ENCODE measurements at regions of chr11 and their contacts with region 1.

Region 1: GRCh38 chr11:118610804-118611795 is 3.7 kb downstream of the PHLDB1 start:
- DNase-seq: peak; percentile 86
- ATAC-seq: peak; percentile 32 to 55 (median 47)
- H3K4me3 ChIP-seq: peak overlapping the region; percentile 60 to 97 (median 74)
- H3K27ac ChIP-seq: peak overlapping the region; percentile 91 to 99 (median 94)
- H3K4me1 ChIP-seq: peaks cover 3 to 81% (median 37%) of the 10 kb centered on the region in 9 donors
- H3K27me3 ChIP-seq: peaks cover 0 to 56% (median 0%) of the 10 kb centered on the region in 7 donors
- CTCF ChIP-seq: peak; percentile 88 to 98 (median 93)

Region 2: DNA sequence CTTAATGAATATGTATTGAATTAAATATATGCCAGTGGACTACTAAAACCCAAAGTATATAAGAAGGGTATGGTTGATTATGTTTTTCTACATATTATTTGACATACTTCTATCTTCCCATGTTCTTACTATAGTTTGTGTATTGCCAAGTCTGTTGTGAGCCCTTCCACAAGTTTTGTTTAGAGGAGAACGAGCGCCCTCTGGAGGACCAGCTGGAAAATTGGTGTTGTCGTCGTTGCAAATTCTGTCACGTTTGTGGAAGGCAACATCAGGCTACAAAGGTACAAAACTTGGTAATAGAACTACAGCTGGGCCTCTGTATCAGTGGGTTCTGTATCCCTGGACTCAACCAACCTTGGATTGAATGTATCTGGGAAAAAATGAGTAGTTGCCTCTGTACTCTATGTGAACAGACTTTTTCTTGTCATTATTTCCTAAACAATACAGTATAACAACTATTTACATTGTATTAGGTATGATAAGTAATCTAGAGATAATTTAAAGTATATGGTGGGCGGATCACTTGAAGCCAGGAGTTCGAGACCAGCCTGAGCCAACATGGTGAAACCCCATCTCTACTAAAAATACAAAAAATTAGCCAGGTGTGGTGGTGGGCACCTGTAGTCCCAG is 122.5 kb before region 1 on chr11:
- intact Hi-C with region 1: no loop called
- DNase-seq: peak; percentile 50 to 61
- ATAC-seq: peak in 7 of 8 donors; percentile 46 to 72 (median 62)
- H3K4me3 ChIP-seq: no peak overlapping the region
- H3K27ac ChIP-seq: no peak overlapping the region
- H3K4me1 ChIP-seq: peaks cover 0 to 9% (median 0%) of the 10 kb centered on the region in 9 donors
- H3K27me3 ChIP-seq: no peaks in the 10 kb centered on the region
- CTCF ChIP-seq: peak; percentile 58 to 90 (median 82)

Region 3: DNA sequence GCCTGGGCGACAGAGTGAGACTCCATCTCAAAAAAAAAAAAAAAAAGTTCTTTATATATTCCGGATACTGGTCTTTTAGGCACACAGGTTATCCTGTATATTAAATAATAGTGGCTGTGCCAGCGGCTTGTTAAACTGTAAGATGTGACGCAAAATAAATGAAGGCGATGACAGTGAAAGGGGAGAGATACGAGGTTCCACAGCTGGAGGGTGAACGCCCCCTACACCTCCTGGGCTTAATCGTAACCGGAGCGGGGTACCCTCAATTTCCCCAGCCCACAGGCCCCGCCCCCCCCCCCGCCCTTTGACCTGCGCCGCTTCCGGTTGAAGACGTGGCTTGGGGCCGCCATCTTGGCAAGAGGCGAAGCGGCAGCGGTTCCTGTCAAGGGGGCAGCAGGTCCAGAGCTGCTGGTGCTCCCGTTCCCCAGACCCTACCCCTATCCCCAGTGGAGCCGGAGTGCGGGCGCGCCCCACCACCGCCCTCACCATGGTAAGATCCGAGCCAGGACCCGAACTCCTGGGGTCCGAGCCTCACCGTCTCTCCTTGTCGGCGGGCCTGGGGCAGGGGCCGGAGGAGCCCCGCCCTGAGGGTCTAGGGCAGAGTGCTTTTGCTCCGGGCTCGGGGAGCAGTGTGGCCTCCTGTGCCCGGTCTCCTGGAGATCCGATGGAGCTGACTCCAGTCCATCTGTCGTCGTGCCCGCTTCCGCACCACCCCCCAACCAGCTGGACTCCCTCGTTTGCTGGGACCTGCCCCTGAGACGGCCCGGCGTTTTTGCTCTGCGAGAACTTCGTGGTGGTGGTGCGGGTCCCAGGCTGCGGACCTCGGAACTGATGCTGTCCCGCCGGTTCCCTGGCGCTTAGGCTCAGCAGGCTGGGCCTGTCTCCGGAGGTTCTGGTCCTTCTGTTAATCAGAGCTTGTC is 38.8 kb before region 1 on chr11 and contains the start of gene ARCN1:
- intact Hi-C with region 1: loop called in 2 of 10 experiments (anchors 5 kb)
- DNase-seq: peak; percentile 80 to 81
- ATAC-seq: peak; percentile 86 to 94 (median 90)
- H3K4me3 ChIP-seq: peak within 1 kb of the TSS; percentile 88 to 99 (median 97)
- H3K27ac ChIP-seq: peak within 1 kb of the TSS; percentile 90 to 100 (median 98)
- H3K4me1 ChIP-seq: peaks cover 7 to 53% (median 40%) of the 10 kb centered on the region in 9 donors
- H3K27me3 ChIP-seq: no peaks in the 10 kb centered on the region
- CTCF ChIP-seq: no peak
- total RNA-seq, gene ARCN1: 84.8 to 122 (median 98.3) TPM

Region 4: DNA sequence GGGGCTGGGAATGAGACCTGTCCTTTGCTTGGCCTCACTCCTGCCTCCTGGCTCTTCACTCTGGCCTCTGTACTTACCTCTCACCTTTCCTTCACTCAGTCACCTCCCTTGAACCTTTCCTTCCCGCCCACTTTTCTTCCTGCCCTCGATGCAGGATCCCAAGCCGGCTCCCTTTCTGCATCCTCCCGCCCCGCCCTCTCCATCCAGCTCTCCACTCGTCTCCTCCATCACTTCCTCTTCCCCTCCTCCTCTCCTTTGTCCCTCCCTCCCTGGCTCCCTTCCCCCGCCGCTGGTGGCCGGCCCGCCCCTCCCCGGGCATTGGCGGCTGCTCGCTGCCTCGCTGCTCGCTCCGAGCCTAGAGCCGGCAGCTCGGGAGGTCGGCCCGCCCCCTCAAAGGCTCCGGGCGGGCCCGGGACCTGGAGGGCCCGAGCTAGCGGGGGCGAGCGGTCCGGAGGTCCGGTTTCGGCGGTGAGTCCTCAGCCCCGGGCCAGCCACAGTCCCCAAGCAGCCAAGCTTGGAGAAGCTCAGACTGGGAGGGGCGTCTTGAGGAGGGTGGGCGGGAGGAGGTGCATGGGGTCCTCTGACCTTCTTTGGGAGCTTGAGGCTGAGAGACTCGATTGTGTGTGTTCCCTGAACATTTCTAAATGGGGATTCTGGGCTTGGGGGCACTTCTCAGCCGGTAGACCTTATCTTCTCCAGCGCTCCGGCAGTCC is 10.1 kb after region 1 on chr11:
- intact Hi-C with region 1: no loop called
- DNase-seq: peak; percentile 91 to 93
- ATAC-seq: peak; percentile 61 to 80 (median 70)
- H3K4me3 ChIP-seq: peak overlapping the region; percentile 19 to 64 (median 58)
- H3K27ac ChIP-seq: peak overlapping the region; percentile 59 to 96 (median 90)
- H3K4me1 ChIP-seq: peaks cover 49 to 99% (median 78%) of the 10 kb centered on the region in 9 donors
- H3K27me3 ChIP-seq: peaks cover 0 to 16% (median 0%) of the 10 kb centered on the region in 7 donors
- CTCF ChIP-seq: no peak

Region 5: DNA sequence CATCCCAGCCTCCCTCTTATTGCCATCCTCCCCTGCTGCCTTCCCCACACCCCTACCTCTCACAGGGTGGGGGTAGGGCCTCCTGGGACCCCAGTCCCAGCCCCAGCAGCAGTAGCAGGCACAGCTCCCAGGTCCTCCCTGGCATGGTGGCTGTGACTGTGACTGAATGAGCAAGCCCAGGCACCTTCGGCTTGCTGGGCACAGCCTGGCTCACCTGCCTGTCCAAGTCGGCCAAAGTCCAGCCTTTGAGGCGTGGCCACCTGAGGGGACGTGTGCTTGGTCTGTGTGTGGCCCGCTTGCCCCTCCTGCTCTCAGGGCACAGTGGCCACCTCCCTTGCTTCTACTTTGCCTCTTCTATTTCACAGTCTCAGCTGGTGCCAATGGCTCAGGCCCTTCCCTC is 68.4 kb after region 1 on chr11 and contains the start of gene TREH:
- intact Hi-C with region 1: no loop called
- DNase-seq: no peak
- ATAC-seq: peak in 3 of 8 donors; percentile 10 to 41 (median 21)
- H3K4me3 ChIP-seq: no peak within 1 kb of the TSS
- H3K27ac ChIP-seq: no peak within 1 kb of the TSS
- H3K4me1 ChIP-seq: peaks cover 0 to 6% (median 0%) of the 10 kb centered on the region in 9 donors
- H3K27me3 ChIP-seq: no peaks in the 10 kb centered on the region
- CTCF ChIP-seq: no peak
- total RNA-seq, gene TREH: 0.11 TPM in 1 of 10 donors, not detected in the others

Measured in heart right ventricle (tissue), 16 donors.